K562 (cell line): ENCODE measurements at regions of chr6 and their contacts with region 1.

Region 1: GRCh38 chr6:52162940-52163908 is 23.0 kb upstream of the IL17A start:
- DNase-seq: peak in 1 of 4 experiments; percentile 24
- ATAC-seq: peak; percentile 82
- H3K4me3 ChIP-seq: no peak overlapping the region
- H3K27ac ChIP-seq: no peak overlapping the region
- H3K4me1 ChIP-seq: no peaks in the 10 kb centered on the region; a peak in 1 of 5 replicates
- H3K27me3 ChIP-seq: no peaks in the 10 kb centered on the region
- CTCF ChIP-seq: peak; percentile 25 to 79 (median 52); a peak in 4 of 6 replicates
- EP300 ChIP-seq: no peak
- POLR2A ChIP-seq: no peak
- RAD21 ChIP-seq: peak; percentile 83 to 86

Region 2: DNA sequence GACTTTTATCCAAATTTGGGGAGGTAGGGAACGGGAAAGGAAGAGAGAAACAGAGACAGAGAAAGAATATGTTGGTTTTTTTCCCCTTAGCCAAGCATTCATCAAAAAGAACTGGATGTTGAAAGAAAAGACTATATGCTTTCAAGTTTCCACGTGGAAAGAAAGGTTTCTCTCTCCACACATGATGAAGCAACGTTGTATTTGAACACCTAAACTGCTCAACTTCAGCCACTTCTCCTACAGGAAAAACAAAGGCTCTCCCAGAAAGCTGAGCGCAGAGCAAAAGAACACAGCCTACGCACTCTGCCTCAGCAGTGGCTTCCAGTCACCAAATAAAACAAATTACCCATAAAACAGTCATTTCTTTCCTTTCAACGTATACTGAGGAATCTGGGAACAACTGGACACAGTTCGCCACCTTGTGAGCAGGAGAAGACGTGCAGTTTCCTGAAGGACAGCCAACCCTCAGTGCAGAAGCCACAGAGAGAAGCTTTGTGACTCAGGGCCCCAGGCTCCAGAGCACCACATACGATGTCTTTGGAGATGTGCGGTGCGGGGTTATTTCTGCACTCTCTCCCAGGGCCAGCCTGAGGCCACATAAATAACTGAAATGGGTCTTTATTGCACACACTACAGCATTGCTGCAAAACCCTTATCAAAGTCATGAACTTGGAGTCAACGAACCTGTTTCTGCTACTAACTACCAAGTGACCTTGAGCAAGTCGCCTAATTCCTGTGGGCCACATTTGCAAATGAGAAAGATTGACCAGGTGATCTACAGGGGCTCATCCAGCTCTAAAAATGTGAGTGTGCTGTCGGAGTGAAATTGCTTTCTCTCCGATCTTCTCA is 71.0 kb after region 1 on chr6:
- CTCF ChIA-PET with region 1: interaction called, 6 read pairs
- POLR2A ChIA-PET with region 1: no interaction called
- in situ Hi-C with region 1: no loop called
- intact Hi-C with region 1: loop called (anchors 1 kb)
- DNase-seq: peak; percentile 18 to 65 (median 34)
- ATAC-seq: peak; percentile 97
- H3K4me3 ChIP-seq: no peak overlapping the region
- H3K27ac ChIP-seq: no peak overlapping the region
- H3K4me1 ChIP-seq: no peaks in the 10 kb centered on the region
- H3K27me3 ChIP-seq: peaks cover 23 to 30% of the 10 kb centered on the region in 2 experiments; a peak in 4 of 5 replicates
- CTCF ChIP-seq: peak; percentile 58 to 72 (median 71); a peak in 5 of 6 replicates
- EP300 ChIP-seq: no peak
- POLR2A ChIP-seq: no peak
- RAD21 ChIP-seq: peak; percentile 79 to 81

Region 3: GRCh38 chr6:52263709-52264540 is 100.7 kb after region 1 on chr6:
- CTCF ChIA-PET with region 1: no interaction called
- POLR2A ChIA-PET with region 1: interaction called, 3 read pairs
- in situ Hi-C with region 1: loop called (anchors 5 kb)
- intact Hi-C with region 1: loop called (anchors 2 kb)
- DNase-seq: peak; percentile 59 to 70 (median 68)
- ATAC-seq: peak; percentile 86
- H3K4me3 ChIP-seq: no peak overlapping the region
- H3K27ac ChIP-seq: no peak overlapping the region
- H3K4me1 ChIP-seq: no peaks in the 10 kb centered on the region
- H3K27me3 ChIP-seq: no peaks in the 10 kb centered on the region
- CTCF ChIP-seq: peak; percentile 81 to 95 (median 92)
- EP300 ChIP-seq: no peak
- POLR2A ChIP-seq: no peak
- RAD21 ChIP-seq: peak; percentile 66 to 69

Region 4: DNA sequence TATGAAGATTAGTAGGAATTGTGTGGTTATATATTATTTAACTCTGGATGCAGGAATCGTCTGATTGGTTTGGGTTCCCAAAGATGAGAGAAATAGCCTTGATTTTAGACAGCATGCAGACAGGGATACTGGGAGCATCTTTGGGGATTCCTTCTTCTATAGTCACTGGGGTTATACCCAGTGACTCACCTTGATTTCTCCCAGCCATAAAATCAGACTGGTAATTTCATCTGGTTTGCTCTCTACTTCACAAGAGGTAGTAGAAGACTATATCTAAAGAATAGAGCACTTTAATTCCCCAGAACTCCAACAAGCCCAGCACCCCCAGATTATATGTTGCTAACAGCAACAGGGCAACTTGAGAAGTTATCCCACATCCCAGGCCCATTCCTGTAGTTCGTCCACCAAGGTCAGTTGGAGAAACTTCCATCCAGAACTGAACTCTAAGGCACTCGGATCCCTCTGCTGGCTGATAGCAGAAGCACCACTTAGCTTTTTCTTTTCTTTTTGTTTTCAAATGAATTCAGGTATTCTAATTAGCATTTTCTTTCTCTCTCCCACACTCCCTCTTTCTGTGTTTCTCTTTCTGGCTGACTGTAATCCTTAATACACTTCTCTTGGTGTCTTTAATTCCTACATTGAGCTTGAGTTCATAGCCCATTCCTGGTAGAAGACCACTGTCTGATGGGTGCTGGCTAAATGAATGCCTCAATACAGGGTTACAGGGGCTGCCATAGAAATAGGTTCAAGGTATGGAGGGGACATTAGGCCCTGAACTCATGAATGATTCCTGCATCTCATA is 236.5 kb after region 1 on chr6:
- CTCF ChIA-PET with region 1: no interaction called
- POLR2A ChIA-PET with region 1: no interaction called
- in situ Hi-C with region 1: loop called (anchors 5 kb)
- intact Hi-C with region 1: no loop called
- DNase-seq: peak; percentile 54 to 69 (median 58)
- ATAC-seq: peak; percentile 84
- H3K4me3 ChIP-seq: no peak overlapping the region
- H3K27ac ChIP-seq: no peak overlapping the region
- H3K4me1 ChIP-seq: peaks cover 0 to 4% of the 10 kb centered on the region in 2 experiments; a peak in 4 of 5 replicates
- H3K27me3 ChIP-seq: no peaks in the 10 kb centered on the region
- CTCF ChIP-seq: peak; percentile 83 to 95 (median 86)
- EP300 ChIP-seq: no peak
- POLR2A ChIP-seq: no peak
- RAD21 ChIP-seq: peak; percentile 87 to 92